ENCODE measurements at regions of chr15 and their contacts with region 1.

Region 1: DNA sequence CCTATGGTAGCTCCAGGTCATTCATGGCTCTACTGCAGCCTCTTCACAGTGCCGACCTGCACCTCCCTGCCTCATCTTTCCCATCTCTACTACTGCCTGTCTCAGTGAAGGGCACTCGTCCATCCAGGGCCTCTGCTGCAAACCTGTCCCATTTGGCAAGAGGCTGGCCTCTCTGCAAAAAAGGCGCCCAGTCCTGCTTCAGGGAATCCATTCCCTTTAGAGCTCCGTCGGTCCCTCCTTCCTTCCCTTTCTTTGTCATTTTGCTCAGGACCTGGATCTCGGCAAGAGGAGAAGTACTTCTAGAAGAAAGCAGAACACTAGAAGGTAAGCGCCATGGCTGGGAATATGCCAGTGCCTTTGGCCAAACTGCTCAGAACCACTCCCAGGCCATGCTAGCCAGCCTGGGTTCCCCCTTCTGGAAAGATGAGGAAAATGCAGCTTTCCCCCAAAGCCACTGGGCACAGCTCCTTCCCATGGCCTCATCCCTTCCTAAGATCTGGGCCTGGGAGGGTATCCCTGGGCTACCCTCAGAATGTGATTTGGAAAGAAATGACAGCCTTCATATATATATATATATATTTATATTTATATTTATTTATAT is 6.4 kb upstream of the ISL2 start:
- DNase-seq: peak; percentile 81 to 90
- ATAC-seq: peak; percentile 78 to 88
- H3K4me3 ChIP-seq: no peak overlapping the region
- H3K27ac ChIP-seq: peak overlapping the region; percentile 29 to 40; a peak in 4 of 6 replicates
- H3K4me1 ChIP-seq: peaks cover 48% of the 10 kb centered on the region
- CTCF ChIP-seq: peak; percentile 43
- EP300 ChIP-seq: no peak
- POLR2A ChIP-seq: no peak
- RAD21 ChIP-seq: peak; percentile 58 to 77

Region 2: GRCh38 chr15:76293361-76293760 is 36.8 kb before region 1 on chr15:
- CTCF ChIA-PET with region 1: interaction called, 13 read pairs
- POLR2A ChIA-PET with region 1: no interaction called
- DNase-seq: no peak
- ATAC-seq: 0 out of 6 replicates have a peak, but pooled peaks of 1 of the 2 experiments have one; percentile 30
- H3K4me3 ChIP-seq: no peak overlapping the region
- H3K27ac ChIP-seq: no peak overlapping the region
- H3K4me1 ChIP-seq: peaks cover 9% of the 10 kb centered on the region; the same call in 2 of the 3 replicates
- CTCF ChIP-seq: no peak
- EP300 ChIP-seq: no peak
- POLR2A ChIP-seq: no peak
- RAD21 ChIP-seq: no peak

Region 3: GRCh38 chr15:76311100-76311953 is 18.9 kb before region 1 on chr15 and contains the start of gene ETFA:
- CTCF ChIA-PET with region 1: interaction called, 31 read pairs
- POLR2A ChIA-PET with region 1: interaction called, 61 read pairs
- DNase-seq: peak; percentile 99 to 100
- ATAC-seq: peak; percentile 90 to 93
- H3K4me3 ChIP-seq: peak within 1 kb of the TSS; percentile 66
- H3K27ac ChIP-seq: peak within 1 kb of the TSS; percentile 87 to 94
- H3K4me1 ChIP-seq: peaks cover 56% of the 10 kb centered on the region
- CTCF ChIP-seq: no peak
- EP300 ChIP-seq: no peak
- POLR2A ChIP-seq: peak; percentile 94
- RAD21 ChIP-seq: peak in 1 of 2 experiments; percentile 17; a peak in 1 of 5 replicates
- polyA plus RNA-seq, gene ETFA: 395 and 412 TPM in 2 replicates

Region 4: DNA sequence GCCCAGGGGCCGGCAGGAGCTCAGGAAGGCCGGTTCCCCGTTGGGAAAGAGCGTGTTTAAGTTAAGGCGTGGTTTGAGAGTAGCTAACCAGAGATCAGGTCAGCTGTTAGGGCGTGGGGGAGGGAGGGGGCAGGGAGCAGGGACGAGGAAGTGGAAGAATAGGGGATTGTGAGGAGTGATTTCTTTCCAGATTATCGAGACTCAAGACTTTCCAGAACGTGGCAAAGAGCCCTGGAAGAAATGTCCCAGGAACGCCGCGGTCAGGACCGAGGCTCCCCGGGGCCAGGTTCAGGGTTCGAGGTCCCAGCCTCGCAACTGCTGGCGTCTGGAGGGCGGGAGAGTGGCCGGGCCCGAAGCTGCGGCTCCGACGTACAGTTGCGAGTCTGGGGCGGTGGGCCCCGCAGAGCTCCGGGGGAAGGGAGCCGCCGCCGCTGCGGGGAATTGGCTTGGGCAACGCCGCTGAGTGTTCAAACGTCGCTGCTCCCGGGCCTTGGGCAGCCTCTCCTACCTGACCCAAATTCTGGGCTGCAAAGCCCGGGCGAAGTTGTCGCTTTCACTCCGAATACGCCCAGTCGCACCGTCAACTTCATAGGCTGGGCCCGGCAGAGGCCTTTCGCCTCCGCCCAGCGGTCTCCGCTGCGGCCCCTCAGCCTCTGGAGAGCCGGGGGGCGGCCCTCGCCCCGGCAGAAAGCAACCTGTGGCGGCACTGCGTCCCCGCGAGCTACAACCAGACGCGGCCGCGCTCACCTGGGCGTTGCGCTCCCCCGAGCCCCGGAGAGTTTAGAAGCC is 15.9 kb after region 1 on chr15:
- CTCF ChIA-PET with region 1: interaction called, 11 read pairs
- POLR2A ChIA-PET with region 1: no interaction called
- DNase-seq: no peak
- ATAC-seq: no peak; a peak in 1 of 6 replicates
- H3K4me3 ChIP-seq: no peak overlapping the region
- H3K27ac ChIP-seq: no peak overlapping the region
- H3K4me1 ChIP-seq: peaks cover 9% of the 10 kb centered on the region; the same call in 2 of the 3 replicates
- CTCF ChIP-seq: no peak
- EP300 ChIP-seq: no peak
- POLR2A ChIP-seq: no peak
- RAD21 ChIP-seq: no peak

Region 5: DNA sequence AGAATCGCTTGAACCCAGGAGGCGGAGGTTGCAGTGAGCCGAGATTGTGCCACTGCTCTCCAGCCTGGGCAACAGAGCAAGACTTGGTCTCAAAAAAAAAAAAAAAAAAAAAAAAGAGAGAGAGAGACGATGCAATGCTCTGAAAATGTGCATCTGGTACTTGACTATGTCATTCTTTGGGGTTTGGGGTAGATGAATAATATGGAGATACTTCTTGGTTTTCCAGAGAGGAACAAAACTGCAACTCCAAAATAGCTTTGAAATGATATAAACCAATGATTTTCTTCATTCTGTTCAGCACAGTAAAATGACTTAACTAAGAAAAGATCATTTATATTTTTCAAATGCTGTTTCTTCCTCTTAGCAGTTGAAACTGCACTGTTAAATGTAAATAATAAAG is 165.3 kb after region 1 on chr15:
- CTCF ChIA-PET with region 1: no interaction called
- POLR2A ChIA-PET with region 1: no interaction called
- DNase-seq: no peak
- ATAC-seq: no peak
- H3K4me3 ChIP-seq: no peak overlapping the region
- H3K27ac ChIP-seq: no peak overlapping the region
- H3K4me1 ChIP-seq: no peaks in the 10 kb centered on the region
- CTCF ChIP-seq: no peak
- EP300 ChIP-seq: no peak
- POLR2A ChIP-seq: no peak
- RAD21 ChIP-seq: no peak

Measured in A549 (cell line).